HEK293 (cell line): ENCODE measurements at regions of chr6 and their contacts with region 1.

Region 1: GRCh38 chr6:111605100-111605751 is 452 bp downstream of the TRAF3IP2 start:
- H3K4me3 ChIP-seq: peak overlapping the region; percentile 61
- H3K27ac ChIP-seq: peak overlapping the region; percentile 79
- H3K4me1 ChIP-seq: peaks cover 25% of the 10 kb centered on the region
- CTCF ChIP-seq: no peak

Region 2: GRCh38 chr6:111573892-111574797 is 31.1 kb before region 1 on chr6:
- CTCF ChIA-PET with region 1: interaction called, 3 read pairs
- POLR2A ChIA-PET with region 1: interaction called, 10 read pairs
- H3K4me3 ChIP-seq: no peak overlapping the region
- H3K27ac ChIP-seq: no peak overlapping the region
- H3K4me1 ChIP-seq: peaks cover 17% of the 10 kb centered on the region
- CTCF ChIP-seq: no peak

Region 3: DNA sequence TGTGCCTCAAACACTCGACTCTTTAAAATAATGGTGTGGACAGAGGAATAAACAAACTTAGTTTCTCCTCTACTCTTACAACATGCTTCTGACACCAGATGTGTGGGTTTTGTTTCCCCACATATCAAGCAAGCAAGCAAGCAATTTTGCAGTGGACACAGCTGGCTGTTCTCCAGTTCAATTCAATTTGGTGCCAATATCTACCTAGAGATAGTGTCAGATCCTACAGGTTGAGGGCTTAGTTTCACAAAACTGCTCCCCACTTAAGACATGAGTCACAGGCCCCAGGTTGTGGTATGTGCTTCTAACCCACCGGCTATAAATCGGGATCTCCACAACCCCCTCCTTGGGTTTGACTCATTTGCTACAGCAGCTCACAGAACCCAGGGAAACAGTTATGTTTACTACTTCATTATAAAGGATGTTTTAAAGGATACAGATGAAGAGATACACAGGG is 131.9 kb after region 1 on chr6:
- CTCF ChIA-PET with region 1: no interaction called
- POLR2A ChIA-PET with region 1: no interaction called
- H3K4me3 ChIP-seq: no peak overlapping the region
- H3K27ac ChIP-seq: no peak overlapping the region
- H3K4me1 ChIP-seq: peaks cover 5% of the 10 kb centered on the region; the same call in 1 of the 2 replicates
- CTCF ChIP-seq: no peak